ENCODE measurements at regions of chr17 and their contacts with region 1.

Region 1: DNA sequence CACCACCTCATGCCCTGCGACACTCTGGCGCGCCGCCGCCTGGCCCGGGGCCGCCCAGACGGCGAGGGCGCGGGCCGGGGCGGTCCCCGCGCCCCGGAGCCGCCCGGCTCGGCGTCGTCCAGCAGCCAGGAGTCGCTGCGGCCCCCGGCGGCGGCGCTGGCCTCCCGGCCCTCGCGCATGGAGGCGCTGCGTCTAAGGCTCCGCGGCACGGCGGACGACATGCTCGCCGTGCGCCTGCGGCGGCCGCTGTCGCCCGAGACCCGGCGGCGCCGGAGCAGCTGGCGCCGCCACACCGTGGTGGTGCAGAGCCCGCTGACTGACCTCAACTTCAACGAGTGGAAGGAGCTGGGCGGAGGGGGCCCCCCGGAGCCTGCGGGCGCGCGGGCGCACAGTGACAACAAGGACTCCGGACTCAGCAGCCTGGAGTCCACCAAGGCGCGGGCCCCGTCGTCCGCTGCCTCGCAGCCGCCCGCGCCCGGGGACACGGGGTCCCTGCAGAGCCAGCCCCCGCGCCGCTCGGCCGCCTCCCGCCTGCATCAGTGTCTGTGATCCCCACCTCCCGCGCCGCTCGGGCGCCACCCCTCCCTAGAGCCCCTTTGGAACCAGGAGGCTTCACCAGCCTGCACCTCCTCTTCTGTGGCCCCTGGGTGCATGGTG is 82.3 kb downstream of the ARHGAP23 start:
- DNase-seq: peak; percentile 37
- H3K4me3 ChIP-seq: peak overlapping the region in 1 of 3 donors; percentile 7
- H3K27ac ChIP-seq: no peak overlapping the region
- H3K4me1 ChIP-seq: peaks cover 4 to 14% of the 10 kb centered on the region in 2 donors
- H3K27me3 ChIP-seq: no peaks in the 10 kb centered on the region
- CTCF ChIP-seq: peak in 3 of 6 experiments; percentile 1 to 39 (median 13)
- POLR2A ChIP-seq: no peak

Region 2: DNA sequence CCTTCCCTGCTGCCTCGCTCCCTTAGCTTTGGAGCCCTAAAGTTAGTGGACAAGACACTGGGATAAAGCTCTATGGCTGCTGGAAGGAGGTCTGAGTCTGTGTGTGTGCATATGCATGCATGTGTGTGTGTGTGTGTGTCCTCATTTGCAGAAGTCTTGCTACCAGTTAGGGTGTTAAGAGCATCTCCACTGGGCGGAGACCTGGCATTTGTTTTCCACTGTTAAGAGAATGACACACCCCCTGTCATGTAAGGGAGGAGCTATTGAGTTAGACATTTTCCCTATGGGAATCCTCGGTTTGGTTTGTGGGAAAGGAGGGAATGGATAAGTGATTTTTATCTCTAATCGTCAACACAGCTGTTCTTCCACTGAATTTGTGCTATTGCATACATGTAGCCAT is 107.1 kb before region 1 on chr17:
- intact Hi-C with region 1: no loop called
- DNase-seq: no peak
- H3K4me3 ChIP-seq: no peak overlapping the region
- H3K27ac ChIP-seq: no peak overlapping the region
- H3K4me1 ChIP-seq: no peaks in the 10 kb centered on the region
- H3K27me3 ChIP-seq: no peaks in the 10 kb centered on the region
- CTCF ChIP-seq: no peak
- POLR2A ChIP-seq: no peak

Region 3: DNA sequence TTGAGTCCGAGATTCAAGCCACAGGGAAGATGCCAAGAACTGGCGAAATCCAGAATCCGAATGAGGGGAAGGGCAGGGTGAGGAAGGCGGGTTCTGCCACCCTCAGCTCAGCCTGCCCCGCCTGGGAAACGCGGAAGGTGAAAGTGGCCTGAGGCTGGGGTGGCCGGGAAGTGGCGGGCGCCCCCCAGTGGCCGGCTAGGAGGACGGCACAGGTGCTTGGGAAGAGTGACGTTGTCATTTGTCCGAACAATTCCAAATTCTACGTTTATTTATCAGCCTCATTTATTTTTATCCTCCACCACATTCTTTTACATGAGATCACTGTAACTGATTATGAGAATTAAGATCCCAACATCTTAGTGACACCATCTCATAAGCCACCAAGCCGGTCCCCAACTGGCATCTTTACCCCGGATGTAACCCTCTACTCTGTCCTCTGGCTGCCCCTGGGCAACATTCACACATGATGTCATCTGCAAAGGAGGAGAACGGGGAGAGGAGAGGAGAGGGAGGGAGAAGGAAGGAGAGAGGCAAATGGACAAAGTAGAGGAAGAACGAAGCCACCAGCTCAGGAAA is 73.9 kb after region 1 on chr17:
- intact Hi-C with region 1: loop called (anchors 10 kb)
- DNase-seq: peak; percentile 59 to 64
- H3K4me3 ChIP-seq: no peak overlapping the region
- H3K27ac ChIP-seq: no peak overlapping the region
- H3K4me1 ChIP-seq: peaks cover 0 to 13% of the 10 kb centered on the region in 2 donors
- H3K27me3 ChIP-seq: no peaks in the 10 kb centered on the region
- CTCF ChIP-seq: peak; percentile 69 to 95 (median 82)
- POLR2A ChIP-seq: no peak

Region 4: DNA sequence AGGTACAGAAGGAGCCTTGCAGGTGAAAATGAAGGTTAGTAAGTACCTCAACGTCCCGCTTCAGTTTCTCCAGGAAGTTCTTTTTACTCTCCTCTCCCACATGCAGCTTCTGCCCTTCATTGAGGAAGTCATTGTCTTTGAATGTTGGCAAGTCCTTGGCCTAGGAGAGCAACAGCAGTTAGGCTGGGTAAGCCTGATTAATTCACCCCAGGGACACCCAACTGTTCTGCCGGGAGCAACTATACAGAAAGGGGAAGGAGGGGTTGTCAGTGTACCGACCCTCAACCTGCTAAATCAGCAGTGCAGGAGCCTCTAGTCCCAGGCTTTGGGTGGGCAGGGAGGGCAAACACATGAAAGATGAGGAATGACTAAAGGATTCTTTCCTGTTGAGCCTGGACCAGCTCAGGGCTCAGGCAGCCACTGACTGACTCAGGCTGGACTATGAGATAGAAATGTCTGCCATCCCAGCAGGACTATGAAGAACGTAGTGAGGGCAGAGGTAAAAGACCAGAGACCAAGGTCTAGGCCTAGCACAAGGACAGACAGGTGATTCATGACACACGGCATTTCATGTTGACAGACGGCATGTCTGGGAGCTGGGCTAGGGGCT is 267.2 kb after region 1 on chr17:
- intact Hi-C with region 1: no loop called
- DNase-seq: no peak
- H3K4me3 ChIP-seq: no peak overlapping the region
- H3K27ac ChIP-seq: no peak overlapping the region
- H3K4me1 ChIP-seq: no peaks in the 10 kb centered on the region
- H3K27me3 ChIP-seq: no peaks in the 10 kb centered on the region
- CTCF ChIP-seq: no peak
- POLR2A ChIP-seq: no peak

Measured in thyroid gland (tissue), 4 donors.